GM10248 (cell line): ENCODE measurements at regions of chr6 and their contacts with region 1.

Region 1: DNA sequence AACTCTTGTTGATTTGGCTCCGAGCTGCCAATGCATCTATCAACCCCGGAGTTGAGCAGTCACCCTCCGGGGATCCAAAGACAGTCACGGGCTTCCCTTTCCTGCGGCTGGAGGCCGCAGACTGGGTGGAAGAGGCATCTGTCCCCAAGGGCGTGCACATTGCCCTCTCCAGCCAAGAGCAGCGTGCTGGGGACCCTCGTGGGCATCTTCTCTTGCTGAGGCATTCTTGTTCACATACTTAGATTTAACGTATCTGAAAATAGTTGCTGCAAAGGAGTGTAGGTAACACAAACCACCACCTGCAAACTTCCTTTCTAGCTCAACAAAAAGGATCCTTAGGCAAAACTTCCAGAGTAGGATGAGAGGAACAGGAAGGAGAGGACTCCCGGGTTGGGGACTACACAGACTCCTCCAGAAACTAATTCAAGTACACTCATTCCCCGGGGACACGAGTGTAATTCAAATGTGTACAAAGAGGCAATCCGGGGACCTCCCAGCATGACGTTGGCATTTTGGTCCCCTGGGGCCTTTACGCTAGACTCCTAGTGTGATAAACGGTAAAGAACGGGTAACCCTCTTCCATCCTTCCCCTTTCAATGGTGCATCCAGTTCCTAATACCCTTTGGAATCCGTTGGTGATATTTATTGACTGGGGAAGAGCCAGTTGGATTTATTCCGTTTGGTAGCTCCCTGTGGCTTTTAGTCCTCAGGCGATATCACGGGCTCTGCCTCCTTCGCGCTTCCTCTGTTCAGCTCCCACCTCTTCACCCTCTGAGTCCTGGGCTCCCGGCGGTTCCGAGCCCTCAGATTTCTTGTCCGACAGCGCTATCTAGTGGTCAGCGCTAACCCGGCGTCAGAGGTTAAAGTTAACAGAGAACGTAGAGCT is 2.7 kb upstream of the COL12A1 start:
- DNase-seq: peak; percentile 70
- CTCF ChIP-seq: peak; percentile 95

Region 2: GRCh38 chr6:73732845-73733675 is 1475.5 kb before region 1 on chr6:
- CTCF ChIA-PET with region 1: interaction called, 89 read pairs
- POLR2A ChIA-PET with region 1: no interaction called
- DNase-seq: peak; percentile 67
- CTCF ChIP-seq: peak; percentile 89

Region 3: GRCh38 chr6:73747289-73747688 is 1461.3 kb before region 1 on chr6:
- CTCF ChIA-PET with region 1: interaction called, 24 read pairs
- POLR2A ChIA-PET with region 1: no interaction called
- DNase-seq: peak; percentile 52
- CTCF ChIP-seq: no peak

Region 4: DNA sequence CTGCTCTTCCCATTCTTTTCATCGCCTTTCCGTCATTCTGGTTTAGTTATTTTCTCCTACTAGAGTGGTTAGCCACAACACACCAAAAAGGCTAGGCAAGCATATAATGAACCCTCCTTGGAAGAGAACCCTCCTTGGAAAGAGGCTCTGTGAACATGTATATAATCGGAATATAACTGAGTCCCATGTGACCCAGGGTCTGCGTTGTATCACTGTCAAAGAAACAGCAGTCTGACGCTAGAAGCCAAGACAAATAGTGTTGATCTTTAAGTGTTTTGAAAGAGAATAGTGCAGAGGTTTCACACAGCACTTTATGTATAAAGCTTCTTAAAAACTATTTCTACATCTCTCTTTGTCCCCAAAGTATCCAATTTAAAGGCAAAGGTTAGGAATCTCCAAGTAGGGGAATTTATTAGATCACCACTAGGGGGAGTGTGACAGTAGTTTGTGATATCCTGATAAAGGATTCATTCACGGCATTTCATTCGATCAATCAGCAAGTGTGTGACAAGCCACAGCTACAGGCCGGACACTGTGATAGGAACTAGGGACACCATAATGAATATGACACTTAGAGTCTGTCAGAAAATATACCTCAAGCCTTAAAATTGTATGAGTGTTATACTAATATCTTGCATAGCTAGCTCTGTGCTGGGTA is 1117.3 kb before region 1 on chr6:
- CTCF ChIA-PET with region 1: interaction called, 67 read pairs
- POLR2A ChIA-PET with region 1: no interaction called
- DNase-seq: peak; percentile 15
- CTCF ChIP-seq: peak; percentile 39

Region 5: DNA sequence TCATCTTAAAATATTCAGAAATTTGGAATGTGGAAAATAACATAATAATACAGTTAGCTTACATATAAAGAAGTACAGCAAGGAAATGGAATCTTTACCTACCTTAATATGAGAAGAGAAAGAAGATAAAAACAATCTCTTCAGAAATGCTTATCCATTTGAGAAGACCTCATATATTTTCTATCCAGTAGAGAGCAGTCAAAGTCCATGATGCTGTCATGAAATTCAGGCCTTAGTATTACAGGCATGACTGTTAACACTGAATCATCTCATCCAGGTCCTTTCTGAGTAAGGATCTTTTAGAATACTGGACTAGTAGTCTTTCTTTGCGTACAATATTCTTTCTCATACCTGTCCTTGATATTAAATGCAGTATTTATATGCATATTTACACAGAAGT is 799.1 kb before region 1 on chr6:
- CTCF ChIA-PET with region 1: interaction called, 85 read pairs
- POLR2A ChIA-PET with region 1: no interaction called
- DNase-seq: peak; percentile 8
- CTCF ChIP-seq: peak; percentile 22

Region 6: DNA sequence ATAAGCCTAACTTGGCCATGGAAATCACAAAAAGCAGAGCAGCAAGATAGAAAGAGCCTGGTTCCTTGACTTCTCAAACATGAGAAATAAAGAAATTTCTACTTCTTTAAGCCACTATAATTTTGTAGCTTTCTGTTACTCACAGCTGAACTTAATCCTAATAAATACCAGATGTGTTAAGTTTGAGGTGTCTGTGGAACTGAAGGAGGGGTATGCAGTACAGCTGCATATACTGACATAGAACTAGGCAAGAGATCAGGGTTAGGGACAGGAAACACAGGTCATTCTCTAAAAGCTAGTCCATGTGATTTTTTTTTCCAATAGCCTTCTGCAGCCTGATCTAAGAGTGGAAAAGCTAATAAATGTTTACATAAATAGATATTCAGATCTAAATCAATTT is 126.6 kb before region 1 on chr6:
- CTCF ChIA-PET with region 1: no interaction called
- POLR2A ChIA-PET with region 1: no interaction called
- DNase-seq: no peak
- CTCF ChIP-seq: no peak

Region 7: GRCh38 chr6:75234126-75234865 is 25.8 kb after region 1 on chr6:
- CTCF ChIA-PET with region 1: interaction called, 10 read pairs
- POLR2A ChIA-PET with region 1: no interaction called
- DNase-seq: no peak
- CTCF ChIP-seq: no peak